Endothelial cell of umbilical vein (primary cell): ENCODE measurements at regions of chr22 and their contacts with region 1.

Region 1: DNA sequence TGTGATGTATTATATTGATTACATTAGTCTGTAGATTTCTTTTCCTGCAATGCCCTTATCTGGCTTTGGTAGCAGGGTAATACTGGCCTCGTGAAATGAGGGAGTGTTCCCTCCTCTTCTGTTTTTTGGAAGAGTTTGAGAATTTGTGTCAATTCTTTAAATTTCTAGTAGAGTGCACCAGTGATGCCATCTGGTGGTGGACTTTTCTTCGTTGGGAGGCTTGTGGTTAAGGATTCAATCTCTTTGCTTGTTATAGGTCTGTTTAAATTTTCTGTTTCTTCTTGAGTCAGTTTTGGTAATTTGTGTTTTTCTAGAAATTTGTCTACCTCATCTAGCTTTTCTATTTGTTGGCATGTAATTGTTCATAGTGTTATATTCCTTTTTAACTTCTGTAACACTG is 18.9 kb downstream of the SHANK3 start:
- DNase-seq: peak; percentile 61
- H3K4me3 ChIP-seq: no peak overlapping the region
- H3K27ac ChIP-seq: no peak overlapping the region
- H3K4me1 ChIP-seq: peaks cover 16% of the 10 kb centered on the region
- H3K27me3 ChIP-seq: no peaks in the 10 kb centered on the region
- CTCF ChIP-seq: peak; percentile 44 to 47
- POLR2A ChIP-seq: no peak

Region 2: DNA sequence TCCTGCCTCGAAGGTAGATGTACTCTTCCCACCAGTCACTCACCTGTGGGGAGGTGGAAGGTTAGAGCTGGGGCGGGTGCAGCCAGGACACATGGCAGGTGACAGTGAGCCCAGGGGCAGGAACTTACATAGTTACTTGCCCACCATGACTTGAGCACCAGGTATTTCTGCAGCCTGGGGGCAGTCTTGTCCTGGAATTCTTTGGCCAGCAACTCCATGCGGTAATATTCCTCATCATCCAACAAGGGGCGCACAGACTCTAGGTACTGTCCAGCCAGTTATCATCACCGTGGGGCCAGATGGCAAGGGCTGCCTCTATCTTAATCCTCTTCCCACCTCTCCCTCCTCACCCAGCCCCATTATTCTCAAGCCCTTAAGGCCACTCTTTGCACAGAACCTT is 115.5 kb before region 1 on chr22:
- CTCF ChIA-PET with region 1: interaction called, 10 read pairs
- POLR2A ChIA-PET with region 1: no interaction called
- dilution Hi-C with region 1: no loop called
- intact Hi-C with region 1: loop called (anchors 1 kb)
- DNase-seq: peak; percentile 68
- H3K4me3 ChIP-seq: no peak overlapping the region
- H3K27ac ChIP-seq: no peak overlapping the region
- H3K4me1 ChIP-seq: no peaks in the 10 kb centered on the region
- H3K27me3 ChIP-seq: no peaks in the 10 kb centered on the region
- CTCF ChIP-seq: peak; percentile 53 to 62
- POLR2A ChIP-seq: no peak

Region 3: DNA sequence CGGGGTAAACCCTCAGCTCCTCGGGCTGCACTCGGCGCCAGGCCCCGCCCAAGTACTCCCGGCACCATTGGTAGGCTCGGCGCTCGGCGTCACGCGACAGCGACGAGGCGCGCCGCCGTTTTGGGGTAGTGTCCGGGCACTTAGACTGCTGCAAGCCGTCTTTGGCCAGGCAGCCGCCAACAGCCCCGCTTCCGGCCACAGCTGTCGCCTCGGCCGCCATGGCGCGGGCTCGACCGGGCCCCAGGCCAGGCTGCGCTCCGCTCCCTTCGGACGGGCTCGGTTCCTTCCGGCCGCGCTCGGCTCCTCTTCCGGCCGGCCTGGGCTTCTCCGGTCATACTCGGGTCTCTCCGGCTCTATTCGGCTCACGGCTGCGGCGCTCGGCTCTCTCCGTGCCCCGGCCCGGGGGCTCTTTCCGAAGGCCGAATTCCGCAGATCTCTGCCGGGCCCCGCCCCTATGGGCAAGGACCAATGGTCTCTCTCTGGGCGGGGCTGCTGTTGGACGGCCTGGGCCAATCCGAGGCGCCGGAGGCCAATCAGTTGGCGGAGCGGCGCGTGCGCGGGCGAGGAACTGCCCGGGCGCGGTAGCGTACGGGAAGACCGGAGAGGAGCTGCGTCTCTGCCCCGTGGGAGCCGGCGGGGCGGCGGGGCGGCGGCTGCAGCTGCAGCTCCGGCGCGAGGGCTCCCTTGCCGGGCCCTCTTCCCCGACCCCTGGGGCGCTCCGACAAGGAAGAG is 108.8 kb before region 1 on chr22 and contains the start of gene CHKB:
- CTCF ChIA-PET with region 1: no interaction called
- POLR2A ChIA-PET with region 1: no interaction called
- dilution Hi-C with region 1: no loop called
- intact Hi-C with region 1: loop called (anchors 2 kb)
- DNase-seq: peak; percentile 98
- H3K4me3 ChIP-seq: peak within 1 kb of the TSS; percentile 73 to 87 (median 85)
- H3K27ac ChIP-seq: peak within 1 kb of the TSS; percentile 87
- H3K4me1 ChIP-seq: peaks cover 13% of the 10 kb centered on the region
- H3K27me3 ChIP-seq: peaks cover 0 to 2% of the 10 kb centered on the region in 2 experiments
- CTCF ChIP-seq: no peak
- POLR2A ChIP-seq: peak; percentile 77
- total RNA-seq, gene CHKB: 57.7 and 62.4 TPM in 2 replicates

Region 4: DNA sequence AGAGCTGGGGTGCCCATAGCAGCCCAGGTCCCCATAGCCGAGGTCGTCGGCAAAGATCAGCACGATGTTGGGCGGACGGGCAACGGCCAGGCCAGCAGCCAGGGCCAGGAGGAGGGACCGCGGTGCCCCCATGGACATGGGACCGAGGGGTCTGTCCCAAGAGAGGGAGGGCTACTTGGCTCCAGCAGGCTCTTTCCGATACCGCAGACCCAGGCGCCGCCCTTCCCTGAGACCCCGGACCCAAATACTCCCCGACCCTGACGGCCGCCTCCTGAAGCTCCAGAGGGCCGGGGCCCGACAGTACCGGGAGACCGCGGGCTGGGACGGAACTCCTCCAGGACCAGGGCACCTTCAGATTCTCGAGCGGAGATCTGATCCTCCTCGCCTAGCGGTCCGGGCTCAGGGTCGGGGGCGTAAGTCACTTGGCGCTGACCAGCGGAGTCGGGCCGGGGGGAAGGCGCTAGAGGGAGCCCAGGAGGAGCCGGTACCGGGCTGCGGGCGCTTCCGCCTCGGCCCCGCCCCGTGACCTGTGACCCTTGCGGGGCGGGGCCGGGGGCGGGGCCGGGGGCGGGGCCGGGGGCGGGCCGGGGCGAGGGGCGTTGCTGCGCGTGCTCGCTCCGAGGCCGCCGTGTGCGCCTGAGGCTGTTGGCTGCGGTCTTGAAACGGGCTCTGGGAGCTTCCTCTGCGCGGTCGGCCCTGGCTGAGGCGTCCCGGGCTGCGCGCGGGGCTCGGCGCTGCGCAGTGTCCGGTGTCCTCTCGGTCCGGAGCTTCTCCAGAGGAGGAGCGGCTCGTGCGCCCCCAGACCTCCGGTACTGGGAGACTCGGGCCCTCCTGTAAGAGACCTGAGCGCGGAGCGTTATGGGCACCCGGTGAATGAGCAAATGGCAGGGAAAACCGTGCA is 63.6 kb before region 1 on chr22 and contains the start of gene ARSA:
- CTCF ChIA-PET with region 1: interaction called, 26 read pairs
- POLR2A ChIA-PET with region 1: no interaction called
- dilution Hi-C with region 1: no loop called
- intact Hi-C with region 1: loop called (anchors 1 kb)
- DNase-seq: peak; percentile 77
- H3K4me3 ChIP-seq: peak within 1 kb of the TSS; percentile 31 to 56 (median 47)
- H3K27ac ChIP-seq: no peak within 1 kb of the TSS
- H3K4me1 ChIP-seq: peaks cover 10% of the 10 kb centered on the region
- H3K27me3 ChIP-seq: no peaks in the 10 kb centered on the region
- CTCF ChIP-seq: peak; percentile 12 to 54
- POLR2A ChIP-seq: peak; percentile 89
- total RNA-seq, gene ARSA: 19.3 and 22.3 TPM in 2 replicates

Region 5: GRCh38 chr22:50641696-50642607 is 49.6 kb before region 1 on chr22:
- CTCF ChIA-PET with region 1: interaction called, 25 read pairs
- POLR2A ChIA-PET with region 1: no interaction called
- dilution Hi-C with region 1: no loop called
- intact Hi-C with region 1: loop called (anchors 5 kb)
- DNase-seq: peak; percentile 74
- H3K4me3 ChIP-seq: no peak overlapping the region
- H3K27ac ChIP-seq: no peak overlapping the region
- H3K4me1 ChIP-seq: peaks cover 14% of the 10 kb centered on the region
- H3K27me3 ChIP-seq: peaks cover 23 to 24% of the 10 kb centered on the region in 2 experiments
- CTCF ChIP-seq: peak; percentile 47 to 56
- POLR2A ChIP-seq: no peak